ENCODE measurements at regions of chr16 and their contacts with region 1.

Region 1: GRCh38 chr16:87956365-87957231 is 5.4 kb downstream of the BANP start:
- DNase-seq: peak; percentile 93
- ATAC-seq: peak; percentile 65
- H3K4me3 ChIP-seq: peak overlapping the region; percentile 11 to 62 (median 42)
- H3K4me3 Mint-ChIP-seq: peak overlapping the region; percentile 91
- H3K27ac ChIP-seq: peak overlapping the region; percentile 79 to 87
- H3K27ac Mint-ChIP-seq: peak overlapping the region; percentile 95
- H3K4me1 ChIP-seq: peaks cover 60 to 84% of the 10 kb centered on the region in 2 donors
- H3K4me1 Mint-ChIP-seq: peaks cover 84% of the 10 kb centered on the region
- H3K27me3 ChIP-seq: no peaks in the 10 kb centered on the region
- H3K27me3 Mint-ChIP-seq: no peaks in the 10 kb centered on the region
- CTCF ChIP-seq: no peak

Region 2: DNA sequence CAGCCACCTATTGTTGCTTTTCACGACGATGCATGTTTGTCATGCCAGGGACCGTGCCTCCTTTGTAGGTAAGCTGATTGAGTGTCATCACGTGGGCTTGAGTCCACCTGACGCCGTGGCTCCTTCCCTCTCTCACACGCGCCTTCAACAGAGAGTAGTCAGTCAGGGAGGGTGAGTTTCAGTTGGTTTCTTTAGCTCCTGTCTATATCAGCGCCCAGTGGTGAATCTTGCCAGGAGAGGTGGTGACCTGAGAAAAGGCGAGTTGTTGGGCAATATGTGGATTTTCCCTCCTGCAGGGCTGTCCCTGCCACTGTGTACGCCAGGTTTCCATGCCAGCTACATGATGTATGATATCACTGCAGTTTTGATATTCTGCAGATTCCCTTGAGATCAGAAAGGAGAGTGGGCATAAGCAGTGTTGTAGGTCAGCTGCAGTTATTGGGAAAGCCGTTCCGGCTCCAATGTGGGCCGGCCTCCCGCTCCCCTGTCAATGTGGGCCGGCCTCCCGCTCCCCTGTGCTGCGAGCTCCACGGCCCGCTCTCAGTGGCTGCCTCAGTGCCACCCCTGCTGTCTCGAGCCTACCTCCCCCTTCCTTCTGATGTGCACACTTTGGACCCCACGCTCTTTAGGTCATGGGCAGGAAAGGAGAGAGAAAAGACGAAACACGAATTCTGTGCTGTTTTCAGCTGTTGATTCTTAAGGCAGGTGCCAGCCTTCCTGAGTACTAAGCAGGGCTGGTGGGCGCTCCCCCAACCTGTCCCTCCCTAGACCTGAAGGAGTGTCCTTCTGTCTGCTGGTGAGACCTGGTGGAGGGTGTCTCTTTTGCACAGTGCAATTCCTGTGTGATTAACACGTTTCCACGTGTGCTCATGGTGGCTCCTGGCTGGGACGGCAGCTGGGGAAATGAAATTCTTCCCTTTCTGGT is 26.2 kb after region 1 on chr16:
- CTCF ChIA-PET with region 1: interaction called, 5 read pairs
- POLR2A ChIA-PET with region 1: no interaction called
- intact Hi-C with region 1: loop called (anchors 1 kb)
- DNase-seq: no peak
- ATAC-seq: peak; percentile 11
- H3K4me3 ChIP-seq: no peak overlapping the region
- H3K4me3 Mint-ChIP-seq: peak overlapping the region; percentile 10
- H3K27ac ChIP-seq: no peak overlapping the region
- H3K27ac Mint-ChIP-seq: peak overlapping the region; percentile 76
- H3K4me1 ChIP-seq: no peaks in the 10 kb centered on the region
- H3K4me1 Mint-ChIP-seq: peaks cover 31% of the 10 kb centered on the region
- H3K27me3 ChIP-seq: no peaks in the 10 kb centered on the region
- H3K27me3 Mint-ChIP-seq: no peaks in the 10 kb centered on the region
- CTCF ChIP-seq: no peak

Region 3: DNA sequence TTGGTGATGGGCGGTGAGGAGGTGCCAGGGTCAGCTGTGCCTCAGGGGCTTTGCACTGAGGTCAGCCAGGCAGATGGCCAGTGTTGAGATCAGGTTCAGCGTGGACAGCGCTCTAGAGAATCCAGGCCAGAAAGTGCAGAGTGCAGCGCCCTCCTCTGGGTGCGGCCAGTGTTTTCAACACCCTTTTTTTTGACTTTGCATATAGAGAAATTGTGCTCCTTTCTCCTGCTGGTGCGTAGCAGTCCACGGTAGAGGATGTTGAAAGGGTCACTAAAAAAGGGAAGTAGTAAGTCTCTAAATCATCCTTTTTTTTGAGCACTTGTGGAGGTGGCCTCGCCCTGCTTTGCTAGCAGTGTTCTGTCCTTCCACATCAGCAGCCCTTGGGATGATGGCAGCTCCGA is 48.6 kb after region 1 on chr16:
- CTCF ChIA-PET with region 1: interaction called, 8 read pairs
- POLR2A ChIA-PET with region 1: no interaction called
- intact Hi-C with region 1: loop called (anchors 1 kb)
- DNase-seq: peak; percentile 72
- ATAC-seq: peak; percentile 86
- H3K4me3 ChIP-seq: no peak overlapping the region
- H3K4me3 Mint-ChIP-seq: peak overlapping the region; percentile 33
- H3K27ac ChIP-seq: peak overlapping the region; percentile 51 to 60
- H3K27ac Mint-ChIP-seq: peak overlapping the region; percentile 54
- H3K4me1 ChIP-seq: peaks cover 17 to 24% of the 10 kb centered on the region in 2 donors
- H3K4me1 Mint-ChIP-seq: peaks cover 41% of the 10 kb centered on the region
- H3K27me3 ChIP-seq: no peaks in the 10 kb centered on the region
- H3K27me3 Mint-ChIP-seq: no peaks in the 10 kb centered on the region
- CTCF ChIP-seq: peak; percentile 72

Region 4: DNA sequence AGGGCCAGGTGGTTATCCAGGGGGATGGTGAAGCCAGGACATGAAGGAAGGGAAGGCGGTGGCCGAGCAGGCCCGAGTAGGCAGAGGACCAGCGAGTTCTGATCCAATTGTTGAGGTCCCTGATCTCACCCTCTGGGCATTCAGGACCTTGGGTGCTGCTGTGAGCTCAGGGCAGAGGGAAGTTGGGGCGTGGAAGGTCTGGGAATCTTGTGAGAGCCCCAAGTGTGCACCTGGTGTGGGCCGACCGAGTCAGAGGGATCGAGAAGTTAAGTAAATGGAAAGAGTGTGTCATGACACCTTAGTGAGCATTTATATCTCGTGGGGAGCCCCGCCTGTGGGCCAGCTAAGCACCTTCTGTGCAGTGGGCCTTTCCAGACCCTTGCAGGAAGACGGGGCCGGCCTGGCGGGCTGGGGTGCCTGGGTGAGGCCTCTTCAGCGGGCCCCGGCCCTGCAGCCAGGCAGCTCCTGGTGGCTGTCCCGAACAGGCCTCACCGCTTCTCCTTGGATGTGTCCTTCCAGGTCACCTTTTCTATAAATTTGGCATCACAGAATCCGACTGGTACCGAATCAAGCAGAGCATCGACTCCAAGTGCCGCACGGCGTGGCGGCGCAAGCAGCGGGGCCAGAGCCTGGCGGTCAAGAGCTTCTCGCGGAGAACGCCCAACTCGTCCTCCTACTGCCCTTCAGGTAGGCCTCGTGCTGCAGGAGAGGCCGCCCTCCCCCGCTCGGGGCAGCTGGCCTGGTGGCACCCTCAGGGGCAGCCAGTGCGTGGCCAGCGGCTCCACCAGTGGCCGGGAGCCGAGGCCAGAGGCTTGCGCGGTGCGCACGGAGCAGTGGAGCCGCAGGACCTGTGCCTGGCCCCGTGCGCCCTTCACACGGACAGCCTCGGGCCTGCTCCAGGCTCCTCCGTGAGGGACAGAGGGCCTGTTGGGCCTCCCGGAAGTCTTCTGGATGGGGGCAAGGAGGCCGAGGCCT is 70.7 kb after region 1 on chr16:
- CTCF ChIA-PET with region 1: no interaction called
- POLR2A ChIA-PET with region 1: no interaction called
- intact Hi-C with region 1: no loop called
- DNase-seq: no peak
- ATAC-seq: no peak
- H3K4me3 ChIP-seq: no peak overlapping the region
- H3K4me3 Mint-ChIP-seq: no peak overlapping the region
- H3K27ac ChIP-seq: no peak overlapping the region
- H3K27ac Mint-ChIP-seq: no peak overlapping the region
- H3K4me1 ChIP-seq: no peaks in the 10 kb centered on the region
- H3K4me1 Mint-ChIP-seq: peaks cover 9% of the 10 kb centered on the region
- H3K27me3 ChIP-seq: no peaks in the 10 kb centered on the region
- H3K27me3 Mint-ChIP-seq: no peaks in the 10 kb centered on the region
- CTCF ChIP-seq: no peak

Region 5: DNA sequence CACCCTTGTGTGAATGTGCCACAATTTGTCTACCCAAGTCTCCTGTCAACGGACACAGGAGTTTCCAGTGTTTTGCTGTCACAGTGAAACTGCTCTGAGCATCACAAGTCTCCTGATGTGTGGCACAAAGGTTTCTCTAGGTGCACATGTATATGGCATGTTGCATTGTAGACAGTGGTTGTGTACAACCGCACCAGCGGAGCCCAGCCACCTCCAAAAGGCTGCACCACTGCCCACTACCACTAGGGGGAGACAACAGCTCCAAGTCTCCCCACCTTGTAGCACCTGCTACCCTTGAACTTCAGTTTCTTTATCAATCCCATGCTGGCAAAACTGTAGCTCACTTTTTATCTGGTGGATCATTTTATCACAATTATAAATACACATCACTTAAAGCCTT is 330.6 kb after region 1 on chr16:
- CTCF ChIA-PET with region 1: no interaction called
- POLR2A ChIA-PET with region 1: no interaction called
- intact Hi-C with region 1: no loop called
- DNase-seq: no peak
- ATAC-seq: no peak
- H3K4me3 ChIP-seq: no peak overlapping the region
- H3K4me3 Mint-ChIP-seq: no peak overlapping the region
- H3K27ac ChIP-seq: no peak overlapping the region
- H3K27ac Mint-ChIP-seq: no peak overlapping the region
- H3K4me1 ChIP-seq: no peaks in the 10 kb centered on the region
- H3K4me1 Mint-ChIP-seq: no peaks in the 10 kb centered on the region
- H3K27me3 ChIP-seq: no peaks in the 10 kb centered on the region
- H3K27me3 Mint-ChIP-seq: no peaks in the 10 kb centered on the region
- CTCF ChIP-seq: peak; percentile 46